Activated B cell treated with CpG ODN at 0.5 μM for 24 hours (primary cell): ENCODE measurements at regions of chr1 and their contacts with region 1.

Region 1: GRCh38 chr1:38474738-38475623 is 384.6 kb downstream of the RRAGC start:
- DNase-seq: peak; percentile 44
- ATAC-seq: peak; percentile 81
- H3K4me3 Mint-ChIP-seq: peak overlapping the region; percentile 91
- H3K27ac Mint-ChIP-seq: peak overlapping the region; percentile 98
- H3K4me1 Mint-ChIP-seq: peaks cover 67% of the 10 kb centered on the region
- H3K27me3 Mint-ChIP-seq: no peaks in the 10 kb centered on the region
- CTCF ChIP-seq: no peak

Region 2: DNA sequence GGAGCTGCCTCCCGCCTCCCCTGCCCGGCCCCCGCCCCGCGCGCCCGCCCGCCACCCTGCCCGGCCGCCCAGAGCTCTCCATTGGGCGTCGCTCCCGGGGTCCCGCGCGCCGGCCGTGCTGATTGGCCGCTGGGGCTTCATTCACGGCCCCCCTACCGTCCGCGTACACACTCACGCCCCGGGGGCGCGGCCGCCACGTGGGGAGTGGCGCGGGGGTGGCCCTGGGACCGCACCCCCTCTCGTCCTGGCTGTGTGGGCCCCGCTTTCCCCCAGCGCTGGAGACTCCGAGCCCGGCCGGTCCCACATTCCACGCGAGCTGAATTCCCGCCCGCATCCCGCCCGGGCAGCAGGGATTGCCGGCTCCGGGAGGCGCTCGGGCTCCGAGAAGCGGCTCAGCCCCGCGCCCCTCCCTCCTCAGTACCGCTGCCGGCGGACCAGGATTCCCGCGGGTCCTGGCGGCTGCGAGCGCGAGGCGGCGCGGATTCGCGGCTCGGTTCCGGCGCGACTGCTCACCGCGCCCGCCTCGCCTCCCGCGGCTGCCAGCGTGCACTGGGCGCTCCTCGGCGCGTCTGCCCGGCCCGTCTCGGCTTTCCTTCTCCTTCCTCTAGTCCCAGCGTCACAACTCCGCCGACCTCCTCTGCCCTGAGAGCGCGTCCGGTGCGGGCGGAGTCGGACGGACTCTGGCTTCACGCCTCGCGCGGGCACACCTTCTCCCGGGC is 427.9 kb before region 1 on chr1:
- CTCF ChIA-PET with region 1: no interaction called
- POLR2A ChIA-PET with region 1: interaction called, 32 read pairs
- intact Hi-C with region 1: loop called (anchors 5 kb)
- DNase-seq: peak; percentile 78
- ATAC-seq: peak; percentile 86
- H3K4me3 Mint-ChIP-seq: peak overlapping the region; percentile 83
- H3K27ac Mint-ChIP-seq: peak overlapping the region; percentile 18
- H3K4me1 Mint-ChIP-seq: peaks cover 29% of the 10 kb centered on the region
- H3K27me3 Mint-ChIP-seq: peaks cover 21% of the 10 kb centered on the region
- CTCF ChIP-seq: no peak

Region 3: DNA sequence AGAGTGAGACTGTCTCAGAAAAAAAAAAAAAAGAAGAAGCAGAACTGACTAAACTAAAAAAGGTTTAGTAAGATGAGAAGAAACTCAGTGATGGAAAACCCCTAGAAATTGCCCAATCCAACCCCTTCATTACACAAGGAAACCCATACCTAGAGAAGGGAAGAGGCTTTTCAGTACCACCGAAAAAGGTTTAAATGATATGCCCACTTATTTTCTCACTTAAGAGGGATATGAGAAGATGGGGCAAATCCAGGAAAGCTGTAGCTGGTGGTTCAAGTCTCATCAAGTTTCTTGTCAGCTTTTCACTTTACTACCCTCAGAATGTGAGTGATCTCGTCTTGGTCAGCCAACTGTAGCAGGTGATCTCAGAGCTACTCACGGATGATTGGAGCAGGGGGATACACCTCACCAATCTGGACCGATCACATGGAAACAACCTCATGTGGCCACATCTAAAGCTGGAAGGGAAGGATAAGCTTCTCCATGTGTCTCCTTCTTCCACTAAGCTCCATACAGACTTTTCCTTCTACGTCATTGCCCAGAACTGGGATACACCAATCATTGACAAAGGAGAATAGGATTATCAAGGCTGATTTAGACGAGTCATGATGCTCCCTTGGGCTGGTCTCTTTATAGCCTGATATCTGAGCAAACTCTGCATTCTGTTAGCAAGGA is 301.7 kb before region 1 on chr1:
- CTCF ChIA-PET with region 1: interaction called, 5 read pairs
- POLR2A ChIA-PET with region 1: interaction called, 56 read pairs
- intact Hi-C with region 1: loop called (anchors 1 kb)
- DNase-seq: no peak
- ATAC-seq: peak; percentile 80
- H3K4me3 Mint-ChIP-seq: peak overlapping the region; percentile 68
- H3K27ac Mint-ChIP-seq: peak overlapping the region; percentile 93
- H3K4me1 Mint-ChIP-seq: peaks cover 37% of the 10 kb centered on the region
- H3K27me3 Mint-ChIP-seq: no peaks in the 10 kb centered on the region
- CTCF ChIP-seq: no peak

Region 4: GRCh38 chr1:38489844-38490270 is 14.9 kb after region 1 on chr1:
- CTCF ChIA-PET with region 1: interaction called, 7 read pairs
- POLR2A ChIA-PET with region 1: interaction called, 31 read pairs
- intact Hi-C with region 1: loop called (anchors 2 kb)
- DNase-seq: no peak
- ATAC-seq: peak; percentile 77
- H3K4me3 Mint-ChIP-seq: no peak overlapping the region
- H3K27ac Mint-ChIP-seq: peak overlapping the region; percentile 20
- H3K4me1 Mint-ChIP-seq: peaks cover 14% of the 10 kb centered on the region
- H3K27me3 Mint-ChIP-seq: peaks cover 3% of the 10 kb centered on the region
- CTCF ChIP-seq: no peak

Region 5: GRCh38 chr1:38559161-38559824 is 84.3 kb after region 1 on chr1:
- CTCF ChIA-PET with region 1: no interaction called
- POLR2A ChIA-PET with region 1: interaction called, 85 read pairs
- intact Hi-C with region 1: loop called (anchors 1 kb)
- DNase-seq: peak; percentile 65
- ATAC-seq: peak; percentile 78
- H3K4me3 Mint-ChIP-seq: peak overlapping the region; percentile 85
- H3K27ac Mint-ChIP-seq: peak overlapping the region; percentile 93
- H3K4me1 Mint-ChIP-seq: peaks cover 64% of the 10 kb centered on the region
- H3K27me3 Mint-ChIP-seq: no peaks in the 10 kb centered on the region
- CTCF ChIP-seq: no peak